CD8-positive, alpha-beta memory T cell (primary cell): ENCODE measurements at regions of chr1 and their contacts with region 1.

Region 1: DNA sequence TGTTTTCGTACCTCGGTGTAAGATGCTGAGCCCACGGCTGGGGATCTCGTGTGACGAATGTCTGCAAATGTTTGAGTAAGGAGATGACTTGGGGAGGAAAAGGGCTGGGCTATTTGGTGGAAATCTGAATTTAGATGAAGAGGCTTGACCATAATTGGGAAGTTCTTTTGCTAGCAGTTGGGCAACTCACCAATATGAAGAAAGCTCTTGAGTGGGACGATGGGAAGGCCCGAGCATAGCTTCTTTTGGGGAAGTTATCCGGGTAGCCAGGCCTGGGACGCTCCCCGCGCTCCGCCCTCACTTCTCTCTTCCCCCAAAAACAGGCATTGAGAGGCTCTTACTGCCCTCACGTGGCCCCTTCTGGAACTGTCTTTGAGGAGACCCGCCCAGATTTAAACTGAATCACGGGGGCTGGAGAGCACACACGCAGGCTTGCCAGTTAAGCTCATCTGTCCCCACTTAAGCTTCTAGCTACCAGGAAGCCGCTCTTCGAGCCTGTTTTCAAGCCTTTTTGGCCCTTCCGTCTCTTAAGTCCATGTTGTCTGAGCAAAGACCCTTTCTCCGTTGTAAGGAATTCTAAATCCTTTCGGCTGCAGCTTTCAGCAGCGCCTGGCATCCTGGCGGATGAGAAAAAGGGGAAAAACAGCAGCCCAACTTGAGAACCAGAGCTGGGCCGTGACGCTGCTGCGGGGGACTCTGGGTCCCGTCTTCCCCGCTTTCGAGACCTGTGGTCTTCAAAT is 93.1 kb downstream of the NID1 start:
- DNase-seq: peak; percentile 73 to 91 (median 80)
- H3K4me3 ChIP-seq: peak overlapping the region; percentile 41
- H3K4me3 Mint-ChIP-seq: peak overlapping the region; percentile 5 to 87 (median 68)
- H3K27ac ChIP-seq: peak overlapping the region; percentile 50
- H3K27ac Mint-ChIP-seq: peak overlapping the region; percentile 44 to 95 (median 90)
- H3K4me1 ChIP-seq: peaks cover 10% of the 10 kb centered on the region
- H3K4me1 Mint-ChIP-seq: peaks cover 14 to 17% (median 16%) of the 10 kb centered on the region in 3 donors
- H3K27me3 ChIP-seq: no peaks in the 10 kb centered on the region
- H3K27me3 Mint-ChIP-seq: no peaks in the 10 kb centered on the region

Region 2: GRCh38 chr1:235758931-235759330 is 212.8 kb before region 1 on chr1:
- CTCF ChIA-PET with region 1: interaction called, 11 read pairs
- POLR2A ChIA-PET with region 1: no interaction called
- DNase-seq: no peak
- H3K4me3 ChIP-seq: no peak overlapping the region
- H3K4me3 Mint-ChIP-seq: no peak overlapping the region
- H3K27ac ChIP-seq: no peak overlapping the region
- H3K27ac Mint-ChIP-seq: peak overlapping the region in 1 of 8 donors; percentile 29
- H3K4me1 ChIP-seq: no peaks in the 10 kb centered on the region
- H3K4me1 Mint-ChIP-seq: no peaks in the 10 kb centered on the region
- H3K27me3 ChIP-seq: no peaks in the 10 kb centered on the region
- H3K27me3 Mint-ChIP-seq: no peaks in the 10 kb centered on the region

Region 3: DNA sequence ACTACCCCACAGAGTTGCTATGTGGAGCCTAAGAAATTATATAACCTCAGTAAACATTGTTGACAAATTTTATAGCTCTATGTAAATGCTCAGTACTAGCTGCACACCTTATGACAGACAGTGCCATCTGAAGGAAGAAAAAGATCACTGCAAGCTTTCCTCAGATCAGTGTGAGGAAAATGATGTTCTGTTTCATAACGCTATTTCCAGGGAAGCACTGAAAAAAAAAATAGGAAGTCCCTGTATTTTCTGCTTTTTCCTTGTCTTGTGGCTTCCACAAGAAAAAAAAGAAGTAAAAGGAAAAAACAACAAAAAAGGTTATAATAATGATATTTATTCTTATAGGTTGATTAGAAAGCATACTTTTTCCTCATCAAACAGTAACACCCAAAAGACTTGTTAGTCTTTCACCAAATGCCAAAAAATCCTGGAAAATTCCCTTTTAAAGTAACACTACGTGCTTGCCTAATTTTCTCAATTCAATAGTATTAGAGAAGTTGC is 128.2 kb before region 1 on chr1:
- CTCF ChIA-PET with region 1: interaction called, 12 read pairs
- POLR2A ChIA-PET with region 1: no interaction called
- DNase-seq: no peak
- H3K4me3 ChIP-seq: no peak overlapping the region
- H3K4me3 Mint-ChIP-seq: no peak overlapping the region
- H3K27ac ChIP-seq: no peak overlapping the region
- H3K27ac Mint-ChIP-seq: peak overlapping the region in 2 of 8 donors; percentile 24 to 35
- H3K4me1 ChIP-seq: peaks cover 16% of the 10 kb centered on the region
- H3K4me1 Mint-ChIP-seq: peaks cover 68 to 87% (median 71%) of the 10 kb centered on the region in 3 donors
- H3K27me3 ChIP-seq: no peaks in the 10 kb centered on the region
- H3K27me3 Mint-ChIP-seq: no peaks in the 10 kb centered on the region

Region 4: DNA sequence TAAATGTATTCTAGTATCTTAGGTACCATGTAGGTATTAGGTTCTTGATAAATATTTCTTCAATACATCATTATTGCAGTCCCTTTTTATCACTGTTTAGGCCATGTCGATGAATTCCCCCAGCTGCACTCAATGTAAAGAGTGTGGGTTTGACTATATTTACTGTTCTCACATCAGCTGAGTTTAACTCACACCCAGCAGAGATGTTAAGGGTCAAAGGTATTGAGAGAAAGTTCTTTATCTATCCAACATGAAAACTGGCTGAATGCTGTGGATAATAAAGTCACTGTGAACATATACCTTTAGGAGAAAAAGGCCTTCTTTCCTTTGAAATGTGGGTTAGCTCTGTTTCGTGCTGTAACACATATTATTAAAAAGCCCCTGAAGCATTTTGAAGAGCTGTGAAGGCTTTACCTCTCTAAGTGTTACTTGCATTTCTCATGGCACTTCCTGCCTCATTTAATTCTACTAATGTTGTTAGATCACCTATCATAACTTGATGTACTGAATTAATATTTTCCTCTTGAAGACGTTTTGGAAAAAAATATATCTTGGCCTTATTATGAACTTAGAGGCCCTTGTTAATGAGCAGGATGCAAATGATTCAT is 86.0 kb before region 1 on chr1:
- CTCF ChIA-PET with region 1: interaction called, 11 read pairs
- POLR2A ChIA-PET with region 1: no interaction called
- DNase-seq: no peak
- H3K4me3 ChIP-seq: no peak overlapping the region
- H3K4me3 Mint-ChIP-seq: peak overlapping the region in 6 of 7 donors; percentile 1 to 45 (median 25)
- H3K27ac ChIP-seq: no peak overlapping the region
- H3K27ac Mint-ChIP-seq: peak overlapping the region; percentile 78 to 96 (median 86)
- H3K4me1 ChIP-seq: peaks cover 34% of the 10 kb centered on the region
- H3K4me1 Mint-ChIP-seq: peaks cover 44 to 58% (median 49%) of the 10 kb centered on the region in 3 donors
- H3K27me3 ChIP-seq: no peaks in the 10 kb centered on the region
- H3K27me3 Mint-ChIP-seq: no peaks in the 10 kb centered on the region

Region 5: GRCh38 chr1:235929216-235929615 is 42.5 kb before region 1 on chr1:
- CTCF ChIA-PET with region 1: interaction called, 15 read pairs
- POLR2A ChIA-PET with region 1: no interaction called
- DNase-seq: no peak
- H3K4me3 ChIP-seq: no peak overlapping the region
- H3K4me3 Mint-ChIP-seq: no peak overlapping the region
- H3K27ac ChIP-seq: no peak overlapping the region
- H3K27ac Mint-ChIP-seq: no peak overlapping the region
- H3K4me1 ChIP-seq: peaks cover 4% of the 10 kb centered on the region
- H3K4me1 Mint-ChIP-seq: peaks cover 12 to 30% (median 30%) of the 10 kb centered on the region in 3 donors
- H3K27me3 ChIP-seq: no peaks in the 10 kb centered on the region
- H3K27me3 Mint-ChIP-seq: no peaks in the 10 kb centered on the region

Region 6: DNA sequence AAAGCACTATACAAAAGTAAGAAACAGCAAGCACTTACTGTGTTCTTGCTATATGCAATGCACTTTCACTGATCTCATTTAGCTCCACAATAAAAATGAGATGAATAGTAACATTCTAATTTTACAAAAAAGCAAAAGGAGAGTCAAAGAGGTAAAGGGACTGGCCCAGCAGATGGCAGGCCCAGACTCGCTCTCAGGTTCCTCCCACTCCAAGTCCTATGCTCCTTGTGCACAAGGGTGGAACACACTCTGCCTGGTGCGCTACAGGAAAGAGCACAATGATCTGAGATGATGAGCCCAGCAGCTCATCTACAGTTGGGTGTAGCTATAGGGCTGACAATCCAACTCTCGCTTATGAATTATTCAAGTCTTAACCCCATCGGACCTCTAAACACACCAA is 10.9 kb before region 1 on chr1:
- CTCF ChIA-PET with region 1: interaction called, 71 read pairs
- POLR2A ChIA-PET with region 1: interaction called, 6 read pairs
- DNase-seq: no peak
- H3K4me3 ChIP-seq: no peak overlapping the region
- H3K4me3 Mint-ChIP-seq: no peak overlapping the region
- H3K27ac ChIP-seq: no peak overlapping the region
- H3K27ac Mint-ChIP-seq: no peak overlapping the region
- H3K4me1 ChIP-seq: no peaks in the 10 kb centered on the region
- H3K4me1 Mint-ChIP-seq: peaks cover 7 to 20% (median 11%) of the 10 kb centered on the region in 3 donors
- H3K27me3 ChIP-seq: no peaks in the 10 kb centered on the region
- H3K27me3 Mint-ChIP-seq: no peaks in the 10 kb centered on the region

Region 7: GRCh38 chr1:236013330-236013729 is 41.6 kb after region 1 on chr1:
- CTCF ChIA-PET with region 1: interaction called, 13 read pairs
- POLR2A ChIA-PET with region 1: no interaction called
- DNase-seq: no peak
- H3K4me3 ChIP-seq: no peak overlapping the region
- H3K4me3 Mint-ChIP-seq: no peak overlapping the region
- H3K27ac ChIP-seq: no peak overlapping the region
- H3K27ac Mint-ChIP-seq: no peak overlapping the region
- H3K4me1 ChIP-seq: no peaks in the 10 kb centered on the region
- H3K4me1 Mint-ChIP-seq: no peaks in the 10 kb centered on the region
- H3K27me3 ChIP-seq: no peaks in the 10 kb centered on the region
- H3K27me3 Mint-ChIP-seq: peaks cover 0 to 2% of the 10 kb centered on the region in 2 donors

Region 8: GRCh38 chr1:236156512-236157208 is 184.9 kb after region 1 on chr1:
- CTCF ChIA-PET with region 1: no interaction called
- POLR2A ChIA-PET with region 1: no interaction called
- DNase-seq: peak in 4 of 5 donors; percentile 34 to 81 (median 60)
- H3K4me3 ChIP-seq: no peak overlapping the region
- H3K4me3 Mint-ChIP-seq: peak overlapping the region; percentile 38 to 81 (median 75)
- H3K27ac ChIP-seq: peak overlapping the region; percentile 18
- H3K27ac Mint-ChIP-seq: peak overlapping the region; percentile 76 to 94 (median 90)
- H3K4me1 ChIP-seq: peaks cover 27% of the 10 kb centered on the region
- H3K4me1 Mint-ChIP-seq: peaks cover 47 to 68% (median 68%) of the 10 kb centered on the region in 3 donors
- H3K27me3 ChIP-seq: no peaks in the 10 kb centered on the region
- H3K27me3 Mint-ChIP-seq: no peaks in the 10 kb centered on the region

Region 9: DNA sequence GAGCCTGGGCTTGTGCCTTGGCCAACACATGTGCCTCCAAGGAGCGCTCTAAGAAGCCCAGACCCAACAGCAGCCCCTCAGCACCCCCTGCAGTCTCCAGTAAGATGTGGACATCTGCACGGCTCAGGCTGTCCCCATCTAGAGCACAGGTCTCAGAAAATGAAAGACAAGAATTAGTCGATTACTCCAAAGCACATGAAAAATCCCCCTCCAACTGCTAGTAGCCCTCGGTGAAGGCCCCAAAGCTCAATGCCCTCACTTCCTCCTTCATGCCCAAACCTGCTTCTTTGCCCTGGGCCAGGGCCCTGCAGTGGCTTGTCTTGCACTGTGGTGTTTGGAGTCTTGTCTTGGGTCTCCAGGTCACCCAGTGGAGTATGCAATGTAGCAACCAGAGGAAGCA is 331.9 kb after region 1 on chr1:
- CTCF ChIA-PET with region 1: no interaction called
- POLR2A ChIA-PET with region 1: no interaction called
- DNase-seq: peak in 1 of 5 donors; percentile 12
- H3K4me3 ChIP-seq: no peak overlapping the region
- H3K4me3 Mint-ChIP-seq: no peak overlapping the region
- H3K27ac ChIP-seq: no peak overlapping the region
- H3K27ac Mint-ChIP-seq: peak overlapping the region in 1 of 8 donors; percentile 24
- H3K4me1 ChIP-seq: no peaks in the 10 kb centered on the region
- H3K4me1 Mint-ChIP-seq: no peaks in the 10 kb centered on the region
- H3K27me3 ChIP-seq: no peaks in the 10 kb centered on the region
- H3K27me3 Mint-ChIP-seq: no peaks in the 10 kb centered on the region